ENCODE measurements at regions of chr5 and their contacts with region 1.

Region 1: GRCh38 chr5:180718810-180719453 is 20.9 kb downstream of the OR2Y1 start:
- DNase-seq: peak; percentile 6
- H3K4me3 ChIP-seq: no peak overlapping the region
- H3K27me3 ChIP-seq: no peaks in the 10 kb centered on the region
- CTCF ChIP-seq: peak; percentile 73

Region 2: DNA sequence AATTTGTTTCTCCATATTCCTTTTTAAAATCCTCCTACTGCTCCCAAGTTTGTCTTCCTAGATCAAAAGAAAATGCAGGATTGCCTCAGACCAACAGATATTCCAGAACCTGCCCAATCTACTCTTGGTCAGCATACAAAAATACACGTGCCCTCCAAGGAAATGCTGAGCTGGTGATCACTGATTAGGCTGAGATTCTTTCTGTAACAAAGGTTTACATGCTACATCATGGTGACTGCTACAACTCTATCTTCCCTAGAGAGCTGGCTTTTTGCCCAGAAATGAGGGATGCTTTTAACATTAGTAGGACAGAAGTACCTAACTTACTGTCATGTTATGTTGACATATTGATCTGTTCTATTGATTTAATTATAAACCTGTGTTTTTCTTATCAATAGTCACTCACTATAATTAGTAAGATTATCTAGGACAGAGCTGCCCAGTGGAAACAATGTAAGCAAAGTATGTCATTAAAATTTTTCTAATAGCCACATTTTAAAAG is 14.5 kb before region 1 on chr5:
- CTCF ChIA-PET with region 1: interaction called, 14 read pairs
- POLR2A ChIA-PET with region 1: no interaction called
- DNase-seq: no peak
- H3K4me3 ChIP-seq: no peak overlapping the region
- H3K27me3 ChIP-seq: no peaks in the 10 kb centered on the region
- CTCF ChIP-seq: no peak

Measured in BJ (cell line).